ENCODE measurements at regions of chr14 and their contacts with region 1.

Region 1: GRCh38 chr14:92540472-92541053 is 27.0 kb downstream of the RIN3 start:
- DNase-seq: peak; percentile 97 to 98
- ATAC-seq: peak; percentile 95
- H3K4me3 ChIP-seq: no peak overlapping the region
- H3K27ac ChIP-seq: peak overlapping the region; percentile 61 to 76
- H3K4me1 ChIP-seq: peaks cover 0 to 2% of the 10 kb centered on the region in 2 donors
- H3K27me3 ChIP-seq: no peaks in the 10 kb centered on the region

Region 2: DNA sequence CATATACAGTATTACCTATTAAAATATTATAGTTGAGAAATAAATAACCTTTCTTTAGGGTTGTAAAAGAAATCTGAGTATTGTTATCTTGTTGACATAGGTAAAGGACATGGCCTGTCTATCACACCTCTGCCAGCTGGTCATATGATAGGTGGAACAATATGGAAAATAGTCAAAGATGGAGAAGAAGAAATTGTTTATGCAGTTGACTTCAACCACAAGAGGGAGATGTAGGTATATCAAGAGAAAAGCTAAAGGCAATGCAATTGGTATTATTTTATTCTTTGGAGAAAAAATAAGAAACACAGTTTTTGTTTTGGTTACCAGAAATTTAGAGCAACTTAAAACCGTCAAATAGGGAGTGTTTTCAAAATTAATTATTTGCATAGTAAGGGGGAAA is 405.3 kb before region 1 on chr14:
- intact Hi-C with region 1: no loop called
- DNase-seq: no peak
- ATAC-seq: no peak
- H3K4me3 ChIP-seq: no peak overlapping the region
- H3K27ac ChIP-seq: no peak overlapping the region
- H3K4me1 ChIP-seq: no peaks in the 10 kb centered on the region
- H3K27me3 ChIP-seq: no peaks in the 10 kb centered on the region

Region 3: DNA sequence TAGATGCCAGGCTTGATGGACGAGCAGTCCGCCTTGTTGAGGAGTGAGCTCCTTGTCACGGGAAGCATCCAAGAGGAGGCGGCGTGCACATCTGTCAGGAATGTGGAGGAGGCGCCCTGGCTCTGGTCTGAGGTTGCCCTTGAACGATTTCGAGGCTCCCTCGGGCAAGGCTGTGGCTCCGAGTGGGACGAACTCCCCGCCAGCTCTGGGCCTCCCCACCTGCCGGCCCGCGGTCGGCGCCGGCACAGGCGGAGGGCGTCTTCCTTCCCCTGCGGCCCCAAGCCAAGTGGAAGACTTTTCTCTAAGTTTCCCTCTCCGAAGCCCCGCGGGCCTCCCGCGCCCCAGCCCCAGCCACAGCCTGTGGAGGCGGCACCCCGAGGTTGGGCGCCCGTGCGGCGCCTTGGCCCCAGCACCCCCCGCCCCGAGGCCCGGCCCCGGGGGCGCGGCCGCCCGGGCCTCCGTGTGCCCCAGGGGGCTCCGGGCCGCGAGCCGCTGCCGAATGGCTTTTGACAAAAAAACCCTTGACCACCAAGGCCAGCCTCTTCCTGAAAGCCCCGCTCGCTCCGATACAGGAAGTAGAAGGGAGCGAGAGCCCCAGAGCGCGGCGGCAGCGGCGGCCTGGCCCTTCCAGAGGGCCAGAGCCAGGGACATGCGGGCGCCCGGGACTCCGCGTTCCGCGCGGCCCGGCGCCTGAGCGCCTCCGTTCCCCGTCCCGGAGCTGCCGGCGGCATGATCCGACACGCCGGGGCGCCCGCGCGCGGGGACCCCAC is 27.2 kb before region 1 on chr14 and contains the start of gene RIN3:
- intact Hi-C with region 1: loop called in 1 of 2 experiments (anchors 2 kb)
- DNase-seq: peak; percentile 81 to 89
- ATAC-seq: peak; percentile 72
- H3K4me3 ChIP-seq: peak within 1 kb of the TSS; percentile 70 to 74
- H3K27ac ChIP-seq: peak within 1 kb of the TSS; percentile 53 to 80
- H3K4me1 ChIP-seq: no peaks in the 10 kb centered on the region
- H3K27me3 ChIP-seq: no peaks in the 10 kb centered on the region
- total RNA-seq, gene RIN3: 49.1 to 53.8 TPM

Region 4: DNA sequence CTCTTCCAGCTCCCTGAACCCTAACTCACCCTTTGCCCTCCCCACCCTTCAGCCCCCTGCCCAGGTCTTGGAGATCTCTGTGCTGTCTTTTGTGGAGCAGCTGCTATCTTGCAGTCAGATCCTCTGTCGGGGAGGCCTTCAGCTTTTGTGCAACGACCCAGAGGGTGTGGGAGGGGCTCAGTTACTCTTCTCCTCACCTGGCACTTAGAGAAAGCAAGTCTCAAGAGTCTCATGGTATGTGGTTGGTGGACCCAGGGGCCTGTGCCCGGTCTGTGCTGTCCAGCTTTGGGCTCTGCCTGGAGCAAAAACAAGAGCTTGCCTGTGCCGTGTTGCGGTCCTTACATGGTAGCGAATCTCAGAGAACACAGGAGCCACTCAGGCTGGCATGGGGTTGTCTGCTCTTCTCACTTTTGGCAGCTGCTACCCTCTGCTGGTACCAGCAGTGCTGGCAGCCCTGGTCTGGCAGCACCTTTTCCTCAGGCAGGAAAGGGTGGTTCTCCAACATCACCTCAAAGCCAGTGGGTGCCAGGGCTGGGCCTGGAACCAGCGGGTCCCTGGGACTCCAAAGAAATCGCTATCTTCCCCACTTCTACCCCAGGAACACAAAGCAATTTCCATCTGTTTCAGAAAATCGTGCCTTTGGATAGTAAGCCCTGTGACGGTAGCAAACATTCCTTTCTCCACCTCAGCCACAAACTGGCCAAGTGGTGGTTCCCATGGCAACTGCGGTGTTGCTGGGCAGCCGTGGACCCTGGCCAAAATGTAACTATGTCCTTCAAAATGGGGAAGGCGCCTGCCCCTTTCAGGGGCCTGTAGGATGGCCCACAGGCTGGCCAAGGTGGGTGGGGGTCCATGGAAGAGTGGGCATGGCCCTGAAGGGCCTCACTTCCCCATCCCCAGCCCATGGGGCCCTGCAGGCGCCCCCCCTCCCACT is 63.0 kb after region 1 on chr14:
- intact Hi-C with region 1: loop called in 1 of 2 experiments (anchors 5 kb)
- DNase-seq: peak; percentile 77 to 88
- ATAC-seq: peak; percentile 84
- H3K4me3 ChIP-seq: no peak overlapping the region
- H3K27ac ChIP-seq: peak overlapping the region; percentile 90 to 98
- H3K4me1 ChIP-seq: peaks cover 0 to 3% of the 10 kb centered on the region in 2 donors
- H3K27me3 ChIP-seq: no peaks in the 10 kb centered on the region

Measured in aorta (tissue), 5 donors.